Activated B cell treated with CpG ODN at 0.5 μM for 24 hours (primary cell): ENCODE measurements at regions of chr2 and their contacts with region 1.

Region 1: GRCh38 chr2:37414470-37414949 is 70.1 kb downstream of the QPCT start:
- DNase-seq: no peak
- ATAC-seq: peak; percentile 61
- H3K4me3 Mint-ChIP-seq: no peak overlapping the region
- H3K27ac Mint-ChIP-seq: no peak overlapping the region
- H3K4me1 Mint-ChIP-seq: peaks cover 6% of the 10 kb centered on the region
- H3K27me3 Mint-ChIP-seq: no peaks in the 10 kb centered on the region
- CTCF ChIP-seq: peak; percentile 60

Region 2: GRCh38 chr2:36318531-36318930 is 1096.0 kb before region 1 on chr2:
- CTCF ChIA-PET with region 1: no interaction called
- POLR2A ChIA-PET with region 1: no interaction called
- intact Hi-C with region 1: no loop called
- DNase-seq: no peak
- ATAC-seq: no peak
- H3K4me3 Mint-ChIP-seq: no peak overlapping the region
- H3K27ac Mint-ChIP-seq: no peak overlapping the region
- H3K4me1 Mint-ChIP-seq: no peaks in the 10 kb centered on the region
- H3K27me3 Mint-ChIP-seq: peaks cover 11% of the 10 kb centered on the region
- CTCF ChIP-seq: no peak

Region 3: DNA sequence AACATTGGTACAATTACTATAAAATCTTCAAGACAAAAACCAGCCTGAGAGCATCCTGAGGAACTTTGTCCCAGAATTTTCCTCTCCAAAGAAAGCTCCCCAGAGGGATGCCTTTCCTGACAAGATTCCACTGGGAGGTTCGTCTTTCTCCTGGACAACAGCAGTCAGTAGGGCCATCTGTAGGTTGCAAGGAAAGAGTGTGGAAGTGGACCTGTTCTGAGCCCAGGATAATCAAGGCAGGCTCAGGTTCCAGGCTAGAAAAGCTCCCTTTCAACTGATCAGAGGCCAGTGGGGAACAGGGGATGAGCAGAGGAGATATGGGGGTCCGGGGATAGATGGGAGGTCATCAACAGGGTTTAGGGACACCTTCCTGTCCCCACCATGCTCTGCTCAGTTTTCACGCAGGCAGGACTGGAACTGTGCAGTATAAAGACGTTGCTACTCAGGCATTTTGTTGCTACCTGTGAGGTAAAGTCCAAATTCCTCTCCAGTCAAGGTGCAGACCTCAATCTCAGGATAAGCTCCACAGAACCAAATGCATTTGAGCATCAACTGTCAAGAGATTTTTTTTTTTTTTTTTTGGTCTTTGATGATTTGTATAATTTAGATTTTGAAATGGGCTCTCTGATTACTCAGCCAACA is 574.4 kb before region 1 on chr2:
- CTCF ChIA-PET with region 1: no interaction called
- POLR2A ChIA-PET with region 1: no interaction called
- intact Hi-C with region 1: no loop called
- DNase-seq: no peak
- ATAC-seq: no peak
- H3K4me3 Mint-ChIP-seq: no peak overlapping the region
- H3K27ac Mint-ChIP-seq: no peak overlapping the region
- H3K4me1 Mint-ChIP-seq: no peaks in the 10 kb centered on the region
- H3K27me3 Mint-ChIP-seq: no peaks in the 10 kb centered on the region
- CTCF ChIP-seq: no peak

Region 4: GRCh38 chr2:37537316-37537715 is 122.8 kb after region 1 on chr2:
- CTCF ChIA-PET with region 1: no interaction called
- POLR2A ChIA-PET with region 1: no interaction called
- intact Hi-C with region 1: loop called (anchors 5 kb)
- DNase-seq: no peak
- ATAC-seq: no peak
- H3K4me3 Mint-ChIP-seq: no peak overlapping the region
- H3K27ac Mint-ChIP-seq: no peak overlapping the region
- H3K4me1 Mint-ChIP-seq: no peaks in the 10 kb centered on the region
- H3K27me3 Mint-ChIP-seq: no peaks in the 10 kb centered on the region
- CTCF ChIP-seq: no peak

Region 5: DNA sequence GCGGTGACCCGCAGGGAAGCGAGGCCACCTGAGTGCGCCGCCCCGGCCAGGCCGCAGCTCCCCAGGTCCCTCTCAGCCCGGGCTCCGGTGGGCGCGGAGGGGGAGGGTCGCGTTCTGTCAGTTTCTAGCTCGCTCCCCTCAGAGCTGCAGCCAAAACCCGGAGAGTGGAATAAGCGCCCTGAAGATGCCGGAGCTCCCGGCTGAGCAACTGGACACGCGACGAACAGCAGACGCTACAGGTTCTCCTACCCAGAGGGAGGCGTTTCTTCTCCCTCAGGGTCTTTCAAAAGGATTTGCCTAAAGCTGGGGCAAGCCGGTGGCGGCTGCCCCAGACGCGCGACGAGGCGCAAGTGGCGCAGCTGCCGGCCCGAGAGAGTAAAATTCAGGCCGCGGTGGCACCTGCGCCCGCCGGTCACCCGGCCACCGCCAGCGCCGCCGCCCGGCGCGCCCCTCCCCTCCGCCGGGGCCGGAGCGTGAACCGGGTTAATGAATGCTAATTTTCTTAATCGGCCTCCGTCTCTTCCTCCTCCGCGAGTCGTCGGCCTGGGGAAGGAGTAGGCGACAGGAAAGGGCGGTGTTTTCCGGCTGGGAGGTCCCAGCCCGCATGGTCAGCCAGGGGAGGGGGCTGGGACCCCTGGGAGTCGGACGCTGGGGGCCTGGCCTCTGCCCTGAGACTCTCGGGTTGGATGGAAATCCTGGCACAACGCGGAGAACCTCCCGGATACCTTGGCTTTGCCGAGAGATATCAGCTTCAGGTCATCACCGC is 257.8 kb after region 1 on chr2:
- CTCF ChIA-PET with region 1: interaction called, 10 read pairs
- POLR2A ChIA-PET with region 1: interaction called, 3 read pairs
- intact Hi-C with region 1: loop called (anchors 1 kb)
- DNase-seq: peak; percentile 68
- ATAC-seq: peak; percentile 54
- H3K4me3 Mint-ChIP-seq: peak overlapping the region; percentile 90
- H3K27ac Mint-ChIP-seq: peak overlapping the region; percentile 84
- H3K4me1 Mint-ChIP-seq: peaks cover 50% of the 10 kb centered on the region
- H3K27me3 Mint-ChIP-seq: no peaks in the 10 kb centered on the region
- CTCF ChIP-seq: no peak

Region 6: DNA sequence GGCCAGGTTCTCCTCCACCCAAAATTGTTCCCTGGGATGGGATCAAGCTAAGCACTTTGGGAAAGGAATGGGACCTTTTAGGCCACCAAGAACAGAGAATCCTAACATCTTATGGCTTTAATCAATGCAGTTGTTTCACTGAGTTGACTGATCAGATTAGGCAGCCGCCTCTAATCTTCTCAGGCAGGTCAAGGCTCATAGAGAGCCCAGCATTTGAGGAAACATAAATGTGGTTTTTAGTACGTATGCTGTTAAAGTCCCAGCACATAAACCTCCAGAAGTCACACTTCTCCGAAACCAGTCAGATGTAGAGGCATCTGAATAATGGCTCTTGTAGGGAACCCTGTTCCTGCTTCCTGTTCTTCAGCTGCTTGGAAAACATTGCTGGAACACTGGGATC is 411.1 kb after region 1 on chr2:
- CTCF ChIA-PET with region 1: interaction called, 289 read pairs
- POLR2A ChIA-PET with region 1: no interaction called
- intact Hi-C with region 1: no loop called
- DNase-seq: no peak
- ATAC-seq: no peak
- H3K4me3 Mint-ChIP-seq: no peak overlapping the region
- H3K27ac Mint-ChIP-seq: no peak overlapping the region
- H3K4me1 Mint-ChIP-seq: peaks cover 13% of the 10 kb centered on the region
- H3K27me3 Mint-ChIP-seq: no peaks in the 10 kb centered on the region
- CTCF ChIP-seq: no peak

Region 7: DNA sequence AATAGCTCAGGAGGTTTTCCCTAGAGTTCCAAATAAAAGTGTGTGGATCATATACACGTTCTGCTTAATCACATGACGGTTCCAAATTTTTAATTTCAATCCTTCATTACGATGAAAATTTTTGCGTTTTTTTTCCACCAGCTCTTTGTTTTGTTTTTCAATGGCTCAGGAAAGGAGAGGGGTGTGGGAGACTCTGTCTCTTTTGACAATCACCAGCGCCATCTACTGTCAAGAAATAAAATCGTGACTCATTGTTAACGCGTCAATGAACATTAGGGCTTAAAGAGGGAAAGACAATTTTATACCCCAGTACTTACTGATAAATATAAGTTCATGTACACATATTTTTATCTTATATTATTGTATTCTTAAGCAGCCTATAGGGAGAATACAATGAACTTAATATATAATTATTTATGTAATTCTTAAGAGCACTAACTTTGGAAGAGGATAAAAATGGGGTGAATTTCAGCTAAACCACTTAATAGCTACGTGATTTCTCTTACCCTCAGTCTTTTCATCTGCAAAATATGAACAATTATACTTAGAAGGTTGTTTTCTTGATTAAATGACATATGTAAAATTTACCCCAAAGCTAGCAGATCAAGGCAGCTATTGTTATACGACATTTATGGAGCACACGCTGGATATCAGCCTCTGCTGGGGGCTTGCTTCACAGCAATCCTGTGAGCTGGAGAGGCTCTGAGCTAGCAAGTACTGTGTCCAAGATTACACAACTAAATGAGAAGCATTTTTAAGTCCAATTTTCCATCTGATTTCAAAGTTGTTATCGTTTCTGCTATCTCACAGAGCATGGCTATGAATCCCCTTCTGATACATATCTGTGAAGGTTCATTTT is 463.2 kb after region 1 on chr2:
- CTCF ChIA-PET with region 1: interaction called, 73 read pairs
- POLR2A ChIA-PET with region 1: no interaction called
- intact Hi-C with region 1: loop called (anchors 1 kb)
- DNase-seq: no peak
- ATAC-seq: peak; percentile 57
- H3K4me3 Mint-ChIP-seq: no peak overlapping the region
- H3K27ac Mint-ChIP-seq: no peak overlapping the region
- H3K4me1 Mint-ChIP-seq: peaks cover 3% of the 10 kb centered on the region
- H3K27me3 Mint-ChIP-seq: peaks cover 21% of the 10 kb centered on the region
- CTCF ChIP-seq: peak; percentile 76

Region 8: DNA sequence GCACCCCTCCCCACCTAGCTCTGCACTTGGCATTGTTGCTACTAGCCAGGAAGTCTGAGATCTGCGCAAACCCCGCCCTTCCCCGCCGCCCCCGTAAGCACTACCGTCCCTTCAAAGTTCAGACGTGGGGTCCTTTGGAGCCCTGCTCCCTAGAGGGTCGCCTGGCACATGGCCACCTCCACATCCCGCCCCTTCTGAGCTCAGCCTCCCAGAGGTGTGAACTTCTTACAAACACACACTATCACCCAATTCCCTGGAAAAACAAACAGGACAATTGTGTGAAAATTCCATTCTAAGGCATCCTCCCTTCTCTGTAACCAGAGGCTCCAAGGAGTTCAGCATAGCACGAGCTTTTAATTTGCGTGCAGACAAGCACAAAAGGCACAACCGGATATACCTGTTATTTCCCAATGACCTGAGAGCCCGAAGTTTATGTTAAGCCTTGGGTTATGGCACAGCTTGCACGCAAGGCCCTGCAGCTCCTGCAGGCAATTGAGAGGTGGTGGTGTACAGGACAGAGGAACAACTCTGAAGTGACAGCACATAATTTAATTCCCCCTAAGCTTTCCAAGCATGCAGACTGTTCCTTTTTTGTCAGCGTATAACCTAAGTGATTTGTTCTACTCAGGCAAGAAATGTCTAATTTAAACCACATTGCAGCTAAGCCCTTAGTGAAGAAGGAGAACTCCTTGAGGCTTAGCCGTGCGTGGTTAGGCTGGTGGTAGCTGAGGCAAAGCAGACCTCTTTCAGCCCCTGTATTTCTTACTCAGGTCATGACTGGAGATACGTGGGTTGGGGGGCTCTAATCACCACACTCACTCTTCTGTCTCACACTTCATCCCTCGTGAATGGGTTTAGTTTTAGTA is 681.7 kb after region 1 on chr2:
- CTCF ChIA-PET with region 1: no interaction called
- POLR2A ChIA-PET with region 1: no interaction called
- intact Hi-C with region 1: no loop called
- DNase-seq: no peak
- ATAC-seq: no peak
- H3K4me3 Mint-ChIP-seq: no peak overlapping the region
- H3K27ac Mint-ChIP-seq: no peak overlapping the region
- H3K4me1 Mint-ChIP-seq: peaks cover 12% of the 10 kb centered on the region
- H3K27me3 Mint-ChIP-seq: peaks cover 60% of the 10 kb centered on the region
- CTCF ChIP-seq: no peak